ENCODE measurements at regions of chr5 and their contacts with region 1.

Region 1: GRCh38 chr5:14182761-14183160 is 39.6 kb downstream of the TRIO start:
- DNase-seq: no peak
- ATAC-seq: no peak
- H3K4me3 ChIP-seq: no peak overlapping the region
- H3K27ac ChIP-seq: peak overlapping the region; percentile 60 to 74 (median 71)
- H3K4me1 ChIP-seq: peaks cover 64 to 68% of the 10 kb centered on the region in 2 donors
- H3K27me3 ChIP-seq: no peaks in the 10 kb centered on the region
- CTCF ChIP-seq: no peak
- POLR2A ChIP-seq: no peak

Region 2: DNA sequence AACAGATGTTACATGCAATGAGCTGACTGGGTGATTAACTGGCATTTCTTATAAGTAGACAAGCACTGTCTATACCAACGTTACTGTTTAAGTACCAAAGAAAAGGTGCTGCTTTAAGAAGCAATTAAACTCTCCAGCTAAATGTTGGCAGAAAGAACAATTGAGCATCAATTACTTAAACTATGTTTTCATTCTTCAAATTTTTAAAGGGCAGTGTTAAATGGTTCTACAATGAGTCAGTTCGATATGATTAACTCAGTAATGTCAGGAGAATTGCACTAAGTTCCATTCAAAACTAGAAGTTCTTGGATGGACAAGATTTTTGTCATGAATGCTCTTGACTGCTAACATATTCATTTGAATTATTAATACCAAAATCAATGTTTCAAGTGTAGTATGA is 832.0 kb before region 1 on chr5:
- in situ Hi-C with region 1: no loop called
- intact Hi-C with region 1: no loop called
- DNase-seq: no peak
- ATAC-seq: no peak
- H3K4me3 ChIP-seq: no peak overlapping the region
- H3K27ac ChIP-seq: no peak overlapping the region
- H3K4me1 ChIP-seq: no peaks in the 10 kb centered on the region
- H3K27me3 ChIP-seq: no peaks in the 10 kb centered on the region
- CTCF ChIP-seq: no peak
- POLR2A ChIP-seq: no peak

Region 3: DNA sequence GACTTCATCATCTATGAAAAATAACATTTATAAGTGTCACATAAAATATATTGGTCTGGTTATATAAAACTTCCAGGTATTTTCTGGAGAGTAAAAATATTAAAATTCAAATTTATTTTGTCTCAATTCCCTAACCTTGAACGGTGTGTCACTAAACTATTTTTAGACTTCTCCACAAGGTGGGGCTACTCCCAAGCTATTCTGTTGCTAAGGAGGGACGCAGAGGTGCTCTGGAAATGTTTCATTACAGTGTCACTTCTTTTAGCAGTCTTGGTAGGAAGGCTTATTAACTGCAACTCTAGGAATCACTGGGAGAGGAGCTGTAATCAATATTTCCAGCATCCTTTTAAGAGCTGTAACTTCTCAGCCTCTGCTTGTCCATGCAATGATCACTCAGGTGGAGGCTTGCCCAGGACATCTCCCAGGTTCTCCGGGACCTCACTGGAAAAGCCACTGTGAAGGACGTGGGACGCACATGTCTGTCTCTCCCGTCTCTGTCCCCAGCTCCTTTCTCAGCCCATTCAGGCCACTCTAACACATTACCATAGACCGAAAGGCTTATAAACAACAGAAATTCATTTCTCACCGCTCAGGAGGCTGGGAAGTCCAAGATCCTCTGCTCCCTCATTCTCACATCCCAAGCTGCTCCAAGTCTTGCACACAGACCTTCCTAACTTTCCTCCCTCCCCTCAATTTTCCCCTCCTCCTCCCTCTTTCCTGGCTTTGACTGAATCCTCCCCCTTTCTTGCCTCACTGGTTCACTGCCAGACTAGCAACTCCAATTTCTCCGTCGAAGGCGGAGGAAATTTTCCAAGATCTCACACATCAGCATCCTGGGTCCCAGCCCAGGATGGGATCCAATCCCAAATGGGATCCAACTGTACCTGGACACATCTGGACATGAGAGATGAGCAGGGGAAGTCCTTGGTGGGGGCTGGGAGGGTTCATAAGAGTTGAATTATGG is 205.6 kb before region 1 on chr5:
- in situ Hi-C with region 1: no loop called
- intact Hi-C with region 1: no loop called
- DNase-seq: no peak
- ATAC-seq: peak in 1 of 2 donors; percentile 56
- H3K4me3 ChIP-seq: no peak overlapping the region
- H3K27ac ChIP-seq: no peak overlapping the region
- H3K4me1 ChIP-seq: no peaks in the 10 kb centered on the region
- H3K27me3 ChIP-seq: no peaks in the 10 kb centered on the region
- CTCF ChIP-seq: peak in 2 of 5 experiments; percentile 9 to 27
- POLR2A ChIP-seq: no peak

Region 4: DNA sequence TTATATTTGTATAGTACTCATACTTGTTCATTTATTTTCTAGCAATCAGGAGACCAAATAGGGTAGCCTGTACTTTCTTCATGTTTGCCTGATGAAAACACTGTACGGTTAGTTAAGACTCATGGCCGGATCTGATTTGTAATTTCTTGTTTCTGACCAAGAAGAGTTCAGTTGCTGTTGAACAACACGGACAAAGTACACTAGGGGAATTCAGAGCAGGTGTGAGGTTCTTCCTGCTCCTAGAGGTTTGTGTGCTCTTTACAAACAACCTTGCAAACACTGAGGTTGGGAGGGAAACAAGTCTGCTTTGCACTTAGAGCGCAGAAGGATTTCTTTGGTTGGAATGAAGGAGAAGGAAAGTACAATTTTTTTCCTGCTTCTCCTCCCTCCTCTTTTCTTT is 30.1 kb after region 1 on chr5:
- in situ Hi-C with region 1: no loop called
- intact Hi-C with region 1: loop called (anchors 1 kb)
- DNase-seq: no peak
- ATAC-seq: no peak
- H3K4me3 ChIP-seq: no peak overlapping the region
- H3K27ac ChIP-seq: no peak overlapping the region
- H3K4me1 ChIP-seq: peaks cover 35 to 52% of the 10 kb centered on the region in 2 donors
- H3K27me3 ChIP-seq: no peaks in the 10 kb centered on the region
- CTCF ChIP-seq: no peak
- POLR2A ChIP-seq: no peak

Measured in gastrocnemius medialis (tissue), 4 donors.